ENCODE measurements at regions of chr2 and their contacts with region 1.

Region 1: DNA sequence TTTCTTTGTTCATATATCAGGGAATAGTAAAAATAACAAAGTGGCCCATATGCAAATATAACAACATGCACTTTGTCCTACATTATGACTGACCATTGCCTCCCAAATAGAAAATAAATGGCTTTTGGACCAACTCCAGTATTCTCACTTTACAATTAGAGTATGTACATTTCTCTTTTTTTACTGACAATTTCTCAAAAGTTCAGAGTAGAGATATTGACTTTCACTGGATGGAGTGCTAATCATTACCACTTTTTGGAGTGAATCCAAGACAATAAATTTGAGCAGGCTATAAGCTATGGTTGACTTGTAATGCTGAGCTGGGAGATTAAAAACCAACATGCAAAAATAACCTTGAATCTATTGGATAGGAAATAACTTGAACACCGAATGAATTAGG is 987.4 kb downstream of the SUCLG1 start:
- DNase-seq: no peak
- ATAC-seq: no peak
- H3K4me3 ChIP-seq: no peak overlapping the region
- H3K27ac ChIP-seq: no peak overlapping the region
- H3K4me1 ChIP-seq: no peaks in the 10 kb centered on the region
- H3K27me3 ChIP-seq: no peaks in the 10 kb centered on the region
- CTCF ChIP-seq: no peak

Region 2: DNA sequence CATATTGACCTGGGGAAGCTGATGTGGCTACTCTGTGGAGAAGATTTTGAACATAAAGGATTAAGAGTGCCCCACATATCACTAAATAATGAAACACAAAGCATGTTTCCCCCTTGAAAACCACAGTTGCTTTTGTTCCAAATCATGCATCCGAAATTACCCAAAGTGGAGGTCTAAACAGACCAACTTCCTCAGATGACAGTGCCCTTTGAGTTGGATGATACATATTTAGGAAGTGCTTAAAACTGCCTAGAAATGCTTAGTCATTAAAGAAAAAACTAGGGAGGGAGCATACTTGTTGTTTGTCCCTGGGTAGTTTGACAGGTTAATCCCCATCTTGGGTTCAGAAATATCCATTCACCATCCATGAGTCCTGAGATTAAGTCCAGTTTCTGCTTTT is 82.9 kb before region 1 on chr2:
- CTCF ChIA-PET with region 1: no interaction called
- POLR2A ChIA-PET with region 1: no interaction called
- intact Hi-C with region 1: loop called (anchors 2 kb)
- DNase-seq: no peak
- ATAC-seq: no peak
- H3K4me3 ChIP-seq: no peak overlapping the region
- H3K27ac ChIP-seq: no peak overlapping the region
- H3K4me1 ChIP-seq: no peaks in the 10 kb centered on the region
- H3K27me3 ChIP-seq: no peaks in the 10 kb centered on the region
- CTCF ChIP-seq: no peak